Motor neuron (in vitro differentiated cells): ENCODE measurements at regions of chr13 and their contacts with region 1.

Region 1: GRCh38 chr13:100514788-100515409 is 73.7 kb downstream of the GGACT start:
- ATAC-seq: peak; percentile 55 to 99 (median 70)
- H3K4me3 ChIP-seq: no peak overlapping the region
- H3K27ac ChIP-seq: no peak overlapping the region
- H3K4me1 ChIP-seq: peaks cover 29 to 32% of the 10 kb centered on the region in 2 donors

Region 2: DNA sequence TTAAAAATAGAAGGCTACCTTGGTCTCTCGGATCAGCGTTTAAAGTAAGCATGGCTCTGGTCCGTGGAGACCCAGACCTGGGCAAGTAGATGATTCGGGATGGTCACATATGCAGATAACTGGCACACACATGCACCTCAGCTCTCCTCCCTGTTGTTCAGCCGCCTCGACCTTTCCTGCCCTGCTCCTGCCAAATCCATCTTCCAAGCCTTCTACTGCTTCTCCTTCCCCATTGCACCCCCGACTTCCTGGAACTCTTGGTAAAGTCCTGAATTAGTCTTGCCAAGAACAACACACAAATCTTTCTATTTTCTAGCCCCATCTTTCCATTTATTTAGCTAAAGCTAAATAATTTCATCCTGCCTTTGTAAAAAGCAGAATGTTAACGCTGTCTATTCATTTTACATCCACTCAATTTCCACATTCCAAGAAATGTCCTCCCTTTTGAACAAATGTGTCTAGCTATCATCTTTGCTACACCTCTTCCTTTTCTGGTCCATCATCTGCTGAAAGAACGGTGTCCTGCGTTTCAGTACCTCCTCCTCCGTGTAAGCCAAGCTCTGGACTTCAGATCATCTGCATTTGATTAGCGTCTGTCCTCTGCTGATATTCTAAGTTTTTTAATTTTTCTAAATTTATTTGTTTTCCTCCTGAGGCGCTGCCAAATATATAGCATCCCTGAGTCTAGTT is 635.8 kb before region 1 on chr13:
- in situ Hi-C with region 1: no loop called
- ATAC-seq: no peak
- H3K4me3 ChIP-seq: no peak overlapping the region
- H3K27ac ChIP-seq: no peak overlapping the region
- H3K4me1 ChIP-seq: no peaks in the 10 kb centered on the region

Region 3: DNA sequence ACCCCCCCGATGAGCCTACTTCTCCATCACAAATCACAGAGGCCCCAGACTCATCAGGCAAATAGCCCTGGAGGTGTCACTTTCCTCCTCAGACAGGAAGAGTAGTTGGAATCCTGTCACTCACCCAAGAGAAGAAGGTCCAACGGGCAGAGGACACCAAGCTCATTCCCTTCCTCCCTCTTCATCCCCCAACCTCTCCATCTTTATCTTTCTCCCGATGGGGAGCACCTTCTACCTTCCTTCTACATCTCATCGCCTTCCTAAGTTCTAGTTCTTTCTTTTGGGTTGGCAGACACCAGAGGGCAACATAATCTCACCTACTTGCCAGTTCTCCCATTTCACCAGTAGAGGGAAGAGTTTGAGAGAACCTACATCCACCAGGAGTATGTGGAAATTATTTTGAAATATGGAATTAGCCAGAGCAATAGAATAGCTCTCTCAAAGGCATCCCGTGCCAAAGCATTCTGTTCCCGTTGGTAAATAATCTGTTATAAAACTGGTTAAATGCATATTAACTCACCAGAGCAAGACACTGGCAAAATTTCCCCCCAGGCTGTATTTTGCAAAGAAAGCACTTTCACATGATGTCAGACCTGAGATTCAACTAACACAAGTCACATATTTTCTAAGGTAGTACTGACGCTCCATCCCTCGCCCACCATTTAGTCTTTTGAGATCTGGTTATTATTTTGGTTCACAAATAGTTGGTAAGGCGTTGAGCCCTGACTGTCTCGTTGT is 598.4 kb before region 1 on chr13:
- in situ Hi-C with region 1: loop called in 2 of 9 experiments (anchors 10 to 25 kb)
- ATAC-seq: peak in 4 of 8 experiments; percentile 33 to 95 (median 90)
- H3K4me3 ChIP-seq: no peak overlapping the region
- H3K27ac ChIP-seq: no peak overlapping the region
- H3K4me1 ChIP-seq: peaks cover 0 to 7% of the 10 kb centered on the region in 2 donors

Region 4: GRCh38 chr13:100063333-100063732 is 451.6 kb before region 1 on chr13:
- in situ Hi-C with region 1: loop called in 1 of 9 experiments (anchors 25 kb)
- ATAC-seq: no peak
- H3K4me3 ChIP-seq: no peak overlapping the region
- H3K27ac ChIP-seq: no peak overlapping the region
- H3K4me1 ChIP-seq: no peaks in the 10 kb centered on the region

Region 5: GRCh38 chr13:100269837-100270236 is 245.1 kb before region 1 on chr13:
- in situ Hi-C with region 1: loop called in 1 of 9 experiments (anchors 25 kb)
- ATAC-seq: peak in 1 of 8 experiments; percentile 58
- H3K4me3 ChIP-seq: no peak overlapping the region
- H3K27ac ChIP-seq: no peak overlapping the region
- H3K4me1 ChIP-seq: no peaks in the 10 kb centered on the region

Region 6: GRCh38 chr13:101035119-101035620 is 520.3 kb after region 1 on chr13:
- in situ Hi-C with region 1: no loop called
- ATAC-seq: no peak
- H3K4me3 ChIP-seq: no peak overlapping the region
- H3K27ac ChIP-seq: no peak overlapping the region
- H3K4me1 ChIP-seq: peaks cover 2 to 5% of the 10 kb centered on the region in 2 donors